ENCODE measurements at regions of chr2 and their contacts with region 1.

Region 1: DNA sequence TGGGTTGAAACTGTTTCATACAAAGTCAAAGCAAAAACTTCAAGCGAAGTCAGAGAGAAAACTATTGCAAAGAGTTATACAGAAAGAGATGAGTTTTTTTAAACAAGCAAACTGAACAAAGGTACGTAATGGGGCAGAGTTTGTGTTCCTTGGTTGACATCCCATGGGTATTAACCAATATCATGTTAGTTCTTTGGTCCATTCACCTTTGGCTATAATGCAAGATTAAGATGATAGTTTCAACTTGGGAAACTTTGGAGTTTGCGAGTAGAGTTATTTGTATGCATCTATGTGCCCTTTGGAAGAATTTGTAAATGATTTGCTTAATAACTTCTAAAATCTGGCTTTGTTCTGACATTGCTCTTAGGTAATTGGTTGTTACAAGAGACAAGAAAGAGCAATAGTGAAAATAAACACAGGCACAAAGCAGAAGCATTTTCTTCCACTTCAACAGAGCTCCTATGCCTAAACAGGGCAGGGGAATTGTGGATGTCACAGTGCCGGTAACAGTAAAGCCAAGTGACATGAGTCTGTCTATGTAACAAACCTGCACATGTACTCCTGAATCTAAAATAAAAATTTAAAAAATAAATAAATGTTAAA is 936.1 kb downstream of the SUCLG1 start:
- DNase-seq: no peak
- ATAC-seq: no peak
- H3K4me3 ChIP-seq: no peak overlapping the region
- H3K27ac ChIP-seq: no peak overlapping the region
- H3K4me1 ChIP-seq: no peaks in the 10 kb centered on the region
- H3K27me3 ChIP-seq: no peaks in the 10 kb centered on the region
- CTCF ChIP-seq: no peak
- POLR2A ChIP-seq: no peak

Region 2: GRCh38 chr2:83572400-83572799 is 49.4 kb after region 1 on chr2:
- intact Hi-C with region 1: loop called in 1 of 10 experiments (anchors 5 kb)
- DNase-seq: no peak
- ATAC-seq: no peak
- H3K4me3 ChIP-seq: no peak overlapping the region
- H3K27ac ChIP-seq: no peak overlapping the region
- H3K4me1 ChIP-seq: no peaks in the 10 kb centered on the region
- H3K27me3 ChIP-seq: no peaks in the 10 kb centered on the region
- CTCF ChIP-seq: no peak
- POLR2A ChIP-seq: no peak

Measured in heart left ventricle (tissue), 16 donors.